ENCODE measurements at regions of chr10 and their contacts with region 1.

Region 1: DNA sequence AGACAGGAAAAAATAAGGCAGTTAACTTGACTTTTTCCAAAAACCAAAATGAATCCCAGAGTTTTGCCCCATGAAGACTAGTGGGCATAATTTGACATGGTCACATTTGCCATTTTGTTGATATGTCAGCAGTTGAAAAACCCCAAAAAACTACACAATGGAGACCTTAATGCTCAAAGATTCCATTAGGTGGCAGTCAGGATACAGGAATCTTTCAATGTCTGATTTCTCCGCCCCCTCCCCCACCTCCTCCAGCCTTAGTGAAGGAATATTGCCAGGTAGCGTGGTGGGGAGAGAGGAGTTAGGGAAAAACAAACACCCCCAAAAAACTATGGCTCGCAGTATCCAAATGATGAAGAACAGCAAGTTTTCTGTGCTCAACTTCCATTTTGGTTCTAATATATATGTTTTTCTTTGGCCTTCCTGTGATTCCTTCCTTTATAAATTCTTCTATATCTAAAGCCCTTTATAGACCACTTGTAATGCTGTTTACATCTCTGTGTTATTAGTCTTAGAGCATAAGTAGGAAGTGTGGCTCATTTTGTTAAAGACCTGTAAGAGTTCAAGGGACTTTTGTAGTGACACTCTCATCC is 6.7 kb upstream of the SMNDC1 start:
- DNase-seq: peak; percentile 29 to 44 (median 41)
- H3K4me3 ChIP-seq: no peak overlapping the region
- H3K27ac ChIP-seq: no peak overlapping the region
- H3K4me1 ChIP-seq: no peaks in the 10 kb centered on the region
- H3K27me3 ChIP-seq: no peaks in the 10 kb centered on the region
- CTCF ChIP-seq: peak in 2 of 3 donors; percentile 44 to 50
- EP300 ChIP-seq: no peak
- POLR2A ChIP-seq: no peak

Region 2: DNA sequence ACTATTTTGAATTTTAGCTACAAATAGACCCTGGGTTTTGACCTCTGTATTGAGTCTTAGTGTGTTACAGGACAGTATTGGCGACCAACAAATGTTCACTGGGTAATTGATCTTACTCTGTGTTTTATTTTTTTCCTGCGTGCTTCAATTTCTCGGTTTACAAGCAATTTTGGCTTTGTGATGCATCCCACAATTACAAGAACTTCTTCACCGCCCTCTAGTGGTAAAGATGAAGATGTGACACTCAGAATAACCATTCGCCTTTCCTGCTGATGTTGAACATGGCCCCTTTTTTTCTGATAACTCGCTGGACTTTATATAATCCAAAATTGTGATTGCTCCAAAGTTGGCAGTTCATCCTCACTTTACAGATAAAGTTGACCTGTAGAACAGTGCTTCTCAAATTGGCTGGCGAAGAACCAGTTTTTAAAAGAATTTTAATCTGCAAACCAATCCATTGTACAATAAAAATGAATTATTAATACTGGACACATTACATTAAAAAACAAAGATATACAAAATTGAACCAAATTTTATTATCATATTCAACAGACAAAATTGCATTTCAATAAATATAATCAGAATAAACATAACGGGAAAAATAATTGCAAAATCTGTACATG is 235.8 kb after region 1 on chr10:
- intact Hi-C with region 1: loop called in 3 of 4 experiments (anchors 5 kb)
- DNase-seq: no peak
- H3K4me3 ChIP-seq: no peak overlapping the region
- H3K27ac ChIP-seq: no peak overlapping the region
- H3K4me1 ChIP-seq: no peaks in the 10 kb centered on the region
- H3K27me3 ChIP-seq: no peaks in the 10 kb centered on the region
- CTCF ChIP-seq: peak; percentile 47 to 81 (median 81)
- EP300 ChIP-seq: no peak
- POLR2A ChIP-seq: no peak

Measured in ovary (tissue), 10 donors.